ENCODE measurements at regions of chr18 and their contacts with region 1.

Region 1: DNA sequence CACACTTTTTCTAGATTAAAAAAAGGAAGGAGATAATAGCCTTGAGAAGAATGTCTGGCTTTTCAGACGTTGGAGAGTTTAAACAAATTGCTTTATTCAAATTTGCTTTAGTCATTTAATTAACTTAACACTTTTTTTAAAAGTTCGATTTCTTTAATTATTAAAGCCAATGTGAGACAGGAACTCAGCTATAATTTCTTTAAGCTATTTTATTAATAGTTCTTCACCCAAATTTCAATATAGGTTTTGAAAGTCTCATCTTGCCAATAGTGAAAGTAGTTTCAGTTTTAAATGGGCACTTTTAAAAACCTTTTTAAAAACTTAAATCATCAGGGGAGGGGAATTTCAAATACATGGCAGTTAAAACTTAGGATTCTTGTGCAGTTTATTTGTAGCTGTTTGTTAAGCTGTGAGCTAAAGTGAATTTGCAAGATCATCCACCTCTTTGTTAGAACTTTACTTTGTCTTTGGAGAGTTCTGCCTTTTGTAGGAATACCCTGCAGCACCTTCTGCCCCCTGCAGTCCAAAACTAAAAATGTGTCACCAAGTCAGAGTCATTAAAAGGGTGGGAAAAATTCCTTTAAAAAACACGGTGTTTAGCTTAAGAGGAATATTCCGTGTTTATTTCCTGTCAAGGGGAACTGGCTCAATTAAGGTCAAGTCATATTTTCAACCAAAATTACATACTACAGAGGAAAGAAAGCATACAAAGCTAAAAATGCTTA is 4.6 kb downstream of the TGIF1 start:
- DNase-seq: no peak
- H3K4me3 Mint-ChIP-seq: peak overlapping the region; percentile 86
- H3K27ac Mint-ChIP-seq: peak overlapping the region; percentile 100
- H3K4me1 Mint-ChIP-seq: peaks cover 62% of the 10 kb centered on the region
- H3K27me3 Mint-ChIP-seq: no peaks in the 10 kb centered on the region

Region 2: GRCh38 chr18:3281456-3282400 is 172.8 kb before region 1 on chr18:
- CTCF ChIA-PET with region 1: interaction called, 21 read pairs
- POLR2A ChIA-PET with region 1: no interaction called
- intact Hi-C with region 1: loop called (anchors 1 kb)
- DNase-seq: no peak
- H3K4me3 Mint-ChIP-seq: no peak overlapping the region
- H3K27ac Mint-ChIP-seq: no peak overlapping the region
- H3K4me1 Mint-ChIP-seq: peaks cover 6% of the 10 kb centered on the region
- H3K27me3 Mint-ChIP-seq: no peaks in the 10 kb centered on the region

Region 3: GRCh38 chr18:3305354-3305762 is 149.2 kb before region 1 on chr18:
- CTCF ChIA-PET with region 1: interaction called, 3 read pairs
- POLR2A ChIA-PET with region 1: no interaction called
- intact Hi-C with region 1: loop called (anchors 1 kb)
- DNase-seq: peak; percentile 77
- H3K4me3 Mint-ChIP-seq: no peak overlapping the region
- H3K27ac Mint-ChIP-seq: peak overlapping the region; percentile 80
- H3K4me1 Mint-ChIP-seq: peaks cover 21% of the 10 kb centered on the region
- H3K27me3 Mint-ChIP-seq: peaks cover 15% of the 10 kb centered on the region

Region 4: GRCh38 chr18:3466045-3466444 is 11.5 kb after region 1 on chr18:
- CTCF ChIA-PET with region 1: interaction called, 16 read pairs
- POLR2A ChIA-PET with region 1: interaction called, 3 read pairs
- intact Hi-C with region 1: no loop called
- DNase-seq: no peak
- H3K4me3 Mint-ChIP-seq: no peak overlapping the region
- H3K27ac Mint-ChIP-seq: no peak overlapping the region
- H3K4me1 Mint-ChIP-seq: peaks cover 23% of the 10 kb centered on the region
- H3K27me3 Mint-ChIP-seq: no peaks in the 10 kb centered on the region

Region 5: GRCh38 chr18:3525870-3526420 is 71.4 kb after region 1 on chr18:
- CTCF ChIA-PET with region 1: interaction called, 14 read pairs
- POLR2A ChIA-PET with region 1: no interaction called
- intact Hi-C with region 1: loop called (anchors 2 kb)
- DNase-seq: peak; percentile 71
- H3K4me3 Mint-ChIP-seq: peak overlapping the region; percentile 11
- H3K27ac Mint-ChIP-seq: peak overlapping the region; percentile 8
- H3K4me1 Mint-ChIP-seq: peaks cover 17% of the 10 kb centered on the region
- H3K27me3 Mint-ChIP-seq: no peaks in the 10 kb centered on the region

Region 6: GRCh38 chr18:3585656-3586509 is 131.4 kb after region 1 on chr18:
- CTCF ChIA-PET with region 1: interaction called, 43 read pairs
- POLR2A ChIA-PET with region 1: interaction called, 10 read pairs
- intact Hi-C with region 1: loop called (anchors 1 kb)
- DNase-seq: peak; percentile 86
- H3K4me3 Mint-ChIP-seq: no peak overlapping the region
- H3K27ac Mint-ChIP-seq: peak overlapping the region; percentile 69
- H3K4me1 Mint-ChIP-seq: peaks cover 45% of the 10 kb centered on the region
- H3K27me3 Mint-ChIP-seq: no peaks in the 10 kb centered on the region

Region 7: GRCh38 chr18:4157352-4157751 is 702.8 kb after region 1 on chr18:
- CTCF ChIA-PET with region 1: no interaction called
- POLR2A ChIA-PET with region 1: no interaction called
- intact Hi-C with region 1: no loop called
- DNase-seq: no peak
- H3K4me3 Mint-ChIP-seq: no peak overlapping the region
- H3K27ac Mint-ChIP-seq: no peak overlapping the region
- H3K4me1 Mint-ChIP-seq: no peaks in the 10 kb centered on the region
- H3K27me3 Mint-ChIP-seq: no peaks in the 10 kb centered on the region

Region 8: GRCh38 chr18:5393779-5394178 is 1939.3 kb after region 1 on chr18:
- CTCF ChIA-PET with region 1: no interaction called
- POLR2A ChIA-PET with region 1: no interaction called
- intact Hi-C with region 1: no loop called
- DNase-seq: no peak
- H3K4me3 Mint-ChIP-seq: no peak overlapping the region
- H3K27ac Mint-ChIP-seq: no peak overlapping the region
- H3K4me1 Mint-ChIP-seq: peaks cover 9% of the 10 kb centered on the region
- H3K27me3 Mint-ChIP-seq: peaks cover 11% of the 10 kb centered on the region

Measured in activated CD4-positive, alpha-beta memory T cell treated with anti-CD3 and anti-CD28 coated beads for 36 hours (primary cell).